PC-3 (cell line): ENCODE measurements at regions of chr4 and their contacts with region 1.

Region 1: GRCh38 chr4:87422104-87423052 is at the start of gene NUDT9:
- DNase-seq: peak; percentile 89
- ATAC-seq: peak; percentile 70
- H3K4me3 ChIP-seq: peak within 1 kb of the TSS; percentile 87
- H3K27ac ChIP-seq: peak within 1 kb of the TSS; percentile 84
- H3K4me1 ChIP-seq: peaks cover 30% of the 10 kb centered on the region
- H3K27me3 ChIP-seq: no peaks in the 10 kb centered on the region
- CTCF ChIP-seq: no peak
- total RNA-seq, gene NUDT9: 7.5 and 14.7 TPM in 2 replicates

Region 2: GRCh38 chr4:87309625-87310024 is 112.8 kb before region 1 on chr4:
- CTCF ChIA-PET with region 1: no interaction called
- POLR2A ChIA-PET with region 1: no interaction called
- intact Hi-C with region 1: no loop called
- DNase-seq: no peak
- ATAC-seq: no peak
- H3K4me3 ChIP-seq: no peak overlapping the region
- H3K27ac ChIP-seq: no peak overlapping the region
- H3K4me1 ChIP-seq: peaks cover 8% of the 10 kb centered on the region
- H3K27me3 ChIP-seq: no peaks in the 10 kb centered on the region
- CTCF ChIP-seq: no peak

Region 3: DNA sequence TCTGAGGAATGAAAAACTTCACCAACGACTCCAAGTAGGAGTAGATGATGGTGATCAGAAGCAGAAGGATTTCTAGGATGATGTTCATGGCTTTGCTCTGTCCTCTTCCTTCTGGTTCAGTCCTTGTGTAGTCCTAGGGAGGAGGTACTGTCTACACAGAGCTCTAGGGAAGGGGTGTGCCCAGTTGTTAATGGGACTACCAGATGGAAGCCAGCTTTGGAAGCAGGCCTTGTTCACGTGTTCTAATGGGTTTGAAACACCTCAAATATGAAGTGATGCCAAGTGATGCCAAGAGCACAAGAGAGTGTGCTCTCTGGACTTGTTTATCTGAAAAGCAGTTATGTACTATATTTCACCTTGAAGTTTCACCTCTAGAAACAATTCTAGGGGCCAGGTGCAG is 99.6 kb before region 1 on chr4 and contains the start of gene HSD17B13:
- CTCF ChIA-PET with region 1: no interaction called
- POLR2A ChIA-PET with region 1: interaction called, 14 read pairs
- intact Hi-C with region 1: no loop called
- DNase-seq: no peak
- ATAC-seq: no peak
- H3K4me3 ChIP-seq: no peak within 1 kb of the TSS
- H3K27ac ChIP-seq: no peak within 1 kb of the TSS
- H3K4me1 ChIP-seq: peaks cover 4% of the 10 kb centered on the region; the same call in 1 of the 2 replicates
- H3K27me3 ChIP-seq: no peaks in the 10 kb centered on the region
- CTCF ChIP-seq: no peak
- total RNA-seq, gene HSD17B13: 0.18 TPM in 1 of 2 replicates, not detected in the other

Region 4: GRCh38 chr4:87375719-87376291 is 46.6 kb before region 1 on chr4:
- CTCF ChIA-PET with region 1: interaction called, 3 read pairs
- POLR2A ChIA-PET with region 1: no interaction called
- intact Hi-C with region 1: loop called (anchors 1 kb)
- DNase-seq: peak; percentile 62
- ATAC-seq: peak; percentile 48
- H3K4me3 ChIP-seq: no peak overlapping the region
- H3K27ac ChIP-seq: no peak overlapping the region
- H3K4me1 ChIP-seq: no peaks in the 10 kb centered on the region
- H3K27me3 ChIP-seq: no peaks in the 10 kb centered on the region
- CTCF ChIP-seq: peak; percentile 70

Region 5: GRCh38 chr4:87390891-87391575 is 31.3 kb before region 1 on chr4 and contains the start of gene HSD17B11:
- CTCF ChIA-PET with region 1: no interaction called
- POLR2A ChIA-PET with region 1: interaction called, 7 read pairs
- intact Hi-C with region 1: loop called (anchors 2 kb)
- DNase-seq: peak; percentile 80
- ATAC-seq: peak; percentile 100
- H3K4me3 ChIP-seq: peak within 1 kb of the TSS; percentile 76
- H3K27ac ChIP-seq: 0 out of 2 replicates have a peak within 1 kb of the TSS, but pooled peaks have one; percentile 9
- H3K4me1 ChIP-seq: no peaks in the 10 kb centered on the region
- H3K27me3 ChIP-seq: no peaks in the 10 kb centered on the region
- CTCF ChIP-seq: peak; percentile 20; the same call in 1 of the 2 replicates
- total RNA-seq, gene HSD17B11: 4.7 and 4.9 TPM in 2 replicates

Region 6: DNA sequence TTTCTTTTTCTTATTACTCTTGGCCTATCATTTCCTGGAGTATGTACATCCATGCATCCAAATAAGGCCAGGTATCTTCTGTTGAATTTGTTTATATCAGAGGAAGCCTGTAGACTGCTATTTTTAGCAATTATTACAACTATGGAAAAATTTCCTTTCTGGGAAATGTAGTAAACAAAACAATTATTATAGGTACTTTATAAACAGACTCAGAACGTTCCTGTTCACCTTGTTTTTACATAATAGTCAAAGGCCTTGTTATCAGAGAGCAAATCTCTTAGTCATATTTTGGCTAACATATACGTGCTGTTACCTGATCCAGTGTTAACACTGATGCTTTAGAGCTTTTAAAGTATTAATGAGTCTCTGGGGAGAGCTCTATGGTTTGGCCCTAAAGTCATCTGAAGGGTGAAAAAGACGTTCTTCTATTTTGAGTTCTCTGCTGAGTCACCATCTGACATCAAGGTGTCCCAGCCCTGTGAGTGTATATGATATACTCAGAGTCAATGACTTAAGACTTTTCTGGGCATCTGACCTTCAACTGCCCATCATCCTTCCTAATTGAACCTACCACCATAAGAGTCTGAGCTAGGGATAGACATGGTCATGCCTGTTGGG is 99.5 kb after region 1 on chr4:
- CTCF ChIA-PET with region 1: no interaction called
- POLR2A ChIA-PET with region 1: no interaction called
- intact Hi-C with region 1: no loop called
- DNase-seq: peak; percentile 89
- ATAC-seq: peak; percentile 97
- H3K4me3 ChIP-seq: no peak overlapping the region
- H3K27ac ChIP-seq: peak overlapping the region; percentile 70
- H3K4me1 ChIP-seq: peaks cover 14% of the 10 kb centered on the region
- H3K27me3 ChIP-seq: no peaks in the 10 kb centered on the region
- CTCF ChIP-seq: no peak